GM12878 (cell line): ENCODE measurements at regions of chr16 and their contacts with region 1.

Region 1: DNA sequence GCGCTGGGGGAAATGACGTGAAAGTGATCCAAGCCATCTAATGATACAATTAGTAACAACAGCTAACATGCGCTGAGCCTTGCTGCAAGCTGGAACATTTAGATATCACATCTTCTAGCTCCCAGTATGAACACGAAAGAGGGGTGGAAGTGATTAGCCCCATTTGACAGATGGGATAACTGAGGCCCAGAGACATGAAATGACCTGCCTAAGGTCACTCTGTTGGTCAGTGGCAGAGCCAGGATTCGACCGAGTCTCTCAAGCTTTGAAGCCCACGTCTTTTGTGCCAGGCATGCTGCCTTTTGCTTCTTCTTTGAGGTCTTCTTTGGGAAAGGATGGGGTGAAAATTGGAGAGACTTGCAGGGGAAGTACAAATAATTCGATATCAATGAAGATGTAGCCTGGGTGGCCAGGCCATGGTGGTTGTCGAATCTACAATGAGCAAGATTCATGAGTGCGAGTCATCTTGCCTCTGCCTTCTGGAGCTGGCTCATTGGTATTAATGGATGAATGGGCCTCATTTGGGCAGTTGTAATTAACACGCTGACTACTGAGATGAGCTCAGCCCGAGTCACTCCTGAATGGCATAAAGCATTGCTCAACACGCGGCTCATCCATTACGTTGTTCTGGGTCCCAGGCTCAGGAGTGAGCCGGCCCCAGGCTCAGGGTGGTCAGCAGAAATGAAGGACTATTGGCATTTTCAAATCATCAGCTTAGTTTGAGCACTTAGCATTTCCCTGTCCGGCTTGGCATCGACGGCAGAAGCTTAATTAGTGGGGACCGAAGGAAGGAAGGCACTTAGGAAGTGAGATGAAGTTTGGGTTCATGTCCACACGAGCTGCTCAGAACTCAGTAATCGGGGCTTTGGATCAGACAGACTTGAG is 28.0 kb upstream of the GPRC5B start:
- DNase-seq: no peak
- ATAC-seq: no peak
- H3K4me3 ChIP-seq: no peak overlapping the region
- H3K27ac ChIP-seq: no peak overlapping the region
- H3K4me1 ChIP-seq: no peaks in the 10 kb centered on the region
- H3K27me3 ChIP-seq: no peaks in the 10 kb centered on the region; a peak in 1 of 4 replicates
- CTCF ChIP-seq: no peak
- EP300 ChIP-seq: no peak
- POLR2A ChIP-seq: no peak
- RAD21 ChIP-seq: no peak

Region 2: DNA sequence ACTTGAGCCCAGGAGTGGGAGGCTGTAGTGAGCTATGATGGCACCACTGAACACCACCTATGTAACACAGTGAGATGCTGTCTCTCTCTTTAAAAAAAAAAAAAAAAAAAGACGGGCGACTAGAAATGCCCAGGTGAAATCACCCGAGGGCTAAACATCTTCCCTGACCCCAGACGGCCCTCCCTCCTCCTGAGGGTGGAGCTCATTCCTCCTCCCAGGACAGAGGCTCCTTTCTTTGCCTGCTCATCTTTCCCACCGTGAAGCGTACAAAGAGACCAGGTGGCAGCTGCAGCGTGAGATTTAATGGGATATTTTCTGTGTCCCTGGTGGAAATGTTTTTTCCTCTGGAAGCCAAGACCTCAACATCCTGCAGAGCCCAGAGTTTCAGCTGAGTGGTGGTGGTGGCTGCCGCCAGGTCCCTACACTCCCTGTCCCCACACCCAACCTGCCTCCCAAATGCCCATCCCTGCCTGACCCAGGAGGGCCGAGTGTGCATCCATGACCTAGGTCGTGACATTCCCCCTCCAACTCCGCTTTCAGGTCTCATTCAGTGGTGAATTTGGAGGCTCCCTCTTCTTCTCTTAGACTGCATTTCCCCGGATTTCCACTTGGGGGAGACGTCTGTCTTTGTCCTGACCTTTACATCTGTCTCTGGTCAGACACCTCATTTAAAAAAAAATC is 13.6 kb before region 1 on chr16:
- CTCF ChIA-PET with region 1: interaction called, 15 read pairs
- POLR2A ChIA-PET with region 1: no interaction called
- RAD21 ChIA-PET with region 1: interaction called, 7 read pairs
- SMC1A ChIA-PET with region 1: no interaction called
- in situ Hi-C with region 1: no loop called
- intact Hi-C with region 1: no loop called
- DNase-seq: no peak
- ATAC-seq: peak; percentile 85
- H3K4me3 ChIP-seq: no peak overlapping the region
- H3K27ac ChIP-seq: no peak overlapping the region
- H3K4me1 ChIP-seq: no peaks in the 10 kb centered on the region
- H3K27me3 ChIP-seq: no peaks in the 10 kb centered on the region; a peak in 1 of 4 replicates
- CTCF ChIP-seq: peak; percentile 72 to 81 (median 79)
- EP300 ChIP-seq: no peak
- POLR2A ChIP-seq: no peak
- RAD21 ChIP-seq: peak; percentile 66